Heart left ventricle (tissue), 16 donors: ENCODE measurements at regions of chr10 and their contacts with region 1.

Region 1: DNA sequence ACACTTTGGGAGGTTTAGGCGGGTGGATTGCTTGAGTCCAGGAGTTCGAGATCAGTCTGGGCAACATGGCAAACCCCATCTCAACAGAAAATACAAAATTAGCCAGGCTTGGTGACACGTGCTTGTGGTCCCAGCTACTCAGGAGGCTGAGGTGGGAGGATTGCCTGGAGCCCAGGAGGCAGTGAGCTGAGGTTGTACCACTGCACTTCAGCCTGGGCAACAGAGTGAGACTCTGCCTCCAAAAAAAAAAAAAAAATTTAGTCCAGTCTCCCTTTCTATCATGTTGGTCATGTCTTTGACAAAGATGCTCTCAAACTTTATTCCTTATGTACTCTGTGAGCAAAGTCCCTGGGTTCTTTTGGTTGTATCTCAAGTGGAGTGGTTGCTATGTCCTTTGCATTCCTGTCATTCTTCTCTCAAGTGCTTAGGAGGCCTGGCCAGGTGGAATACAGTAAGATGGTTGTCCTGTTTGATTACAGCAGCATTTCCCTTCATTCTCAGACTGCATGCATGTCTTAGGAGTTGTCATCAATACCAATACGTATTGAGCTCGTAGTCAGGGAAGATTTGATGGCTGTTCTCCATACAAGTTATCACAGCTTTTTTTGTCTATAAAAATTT is 85.7 kb downstream of the MMRN2 start:
- DNase-seq: no peak
- ATAC-seq: peak in 1 of 4 donors; percentile 23
- H3K4me3 ChIP-seq: no peak overlapping the region
- H3K27ac ChIP-seq: peak overlapping the region in 1 of 12 donors; percentile 11
- H3K4me1 ChIP-seq: peaks cover 0 to 32% (median 19%) of the 10 kb centered on the region in 12 donors
- H3K27me3 ChIP-seq: no peaks in the 10 kb centered on the region
- CTCF ChIP-seq: no peak
- POLR2A ChIP-seq: no peak

Region 2: DNA sequence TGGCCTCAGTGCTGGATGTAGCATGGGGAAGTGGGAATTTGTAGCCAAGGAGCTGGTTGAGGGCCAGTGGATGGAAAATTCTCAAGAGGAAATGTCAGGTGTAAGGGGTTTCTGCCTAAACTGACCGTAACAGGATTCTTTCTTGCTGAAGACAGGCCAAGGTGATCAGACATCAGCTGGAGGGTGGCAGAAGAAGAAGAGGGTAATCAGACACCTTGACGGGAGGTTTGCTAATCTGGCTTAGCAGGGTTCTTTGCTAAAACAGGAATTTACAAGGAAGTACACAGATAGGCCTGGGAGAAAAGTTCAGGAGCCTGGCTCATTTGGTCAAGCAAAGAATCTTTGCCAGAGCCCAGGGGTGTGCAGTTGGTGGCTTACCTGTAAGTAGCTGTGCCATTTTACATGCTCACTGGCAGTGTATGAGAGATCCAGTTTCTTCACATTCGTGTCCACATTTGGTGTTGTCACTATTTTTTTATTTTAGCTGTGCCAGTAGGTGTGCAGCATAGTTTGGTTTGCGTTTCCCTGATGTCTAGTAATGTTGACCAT is 41.6 kb before region 1 on chr10:
- intact Hi-C with region 1: loop called in 1 of 10 experiments (anchors 2 kb)
- DNase-seq: no peak
- ATAC-seq: peak in 1 of 4 donors; percentile 25
- H3K4me3 ChIP-seq: no peak overlapping the region
- H3K27ac ChIP-seq: peak overlapping the region in 1 of 12 donors; percentile 58
- H3K4me1 ChIP-seq: peaks cover 0 to 51% (median 16%) of the 10 kb centered on the region in 12 donors
- H3K27me3 ChIP-seq: no peaks in the 10 kb centered on the region
- CTCF ChIP-seq: no peak
- POLR2A ChIP-seq: no peak